ENCODE measurements at regions of chr10 and their contacts with region 1.

Region 1: DNA sequence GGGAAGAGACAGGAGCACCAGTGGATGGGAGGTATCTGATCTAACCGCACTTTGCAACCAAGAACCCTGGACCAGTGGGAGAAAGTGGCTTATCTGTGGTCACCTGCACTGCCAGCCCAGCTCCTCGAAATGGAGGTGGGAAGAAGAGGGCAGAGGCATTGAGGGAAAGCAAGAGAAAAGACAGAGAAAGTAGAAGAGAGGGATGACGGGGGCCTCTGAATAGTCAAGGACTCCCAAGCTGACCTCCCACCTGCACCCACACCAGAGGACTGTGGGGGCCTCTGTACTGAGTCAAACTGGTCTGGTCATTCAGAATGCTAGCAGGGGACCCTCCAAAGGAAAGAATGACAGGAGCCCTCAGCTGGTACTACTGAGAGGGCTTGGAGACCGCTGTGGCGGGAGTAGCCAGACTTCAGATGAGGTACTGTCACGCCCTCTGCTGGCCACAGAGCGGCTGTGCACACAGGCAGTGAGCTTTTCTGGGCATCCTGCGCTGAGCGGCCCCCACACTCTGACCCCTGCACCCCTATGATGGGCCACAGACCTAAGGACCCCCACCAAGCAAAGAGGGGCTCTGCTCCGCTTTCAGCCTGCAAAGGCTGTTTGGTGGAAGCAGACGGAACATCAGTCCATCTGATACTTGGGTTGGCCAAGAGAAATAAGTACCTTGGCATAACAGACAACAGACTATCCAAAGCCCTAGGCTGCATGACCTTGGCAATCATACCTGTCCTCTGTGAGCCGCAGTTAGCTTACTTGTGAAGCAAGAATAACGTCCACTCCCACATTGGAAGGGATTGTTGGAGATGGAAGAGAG is 112.9 kb downstream of the COL13A1 start:
- DNase-seq: peak; percentile 34
- H3K4me3 Mint-ChIP-seq: no peak overlapping the region
- H3K27ac Mint-ChIP-seq: no peak overlapping the region
- H3K4me1 Mint-ChIP-seq: no peaks in the 10 kb centered on the region
- H3K27me3 Mint-ChIP-seq: peaks cover 5% of the 10 kb centered on the region

Region 2: GRCh38 chr10:69639291-69640195 is 275.1 kb before region 1 on chr10:
- intact Hi-C with region 1: loop called (anchors 10 kb)
- DNase-seq: peak; percentile 38
- H3K4me3 Mint-ChIP-seq: no peak overlapping the region
- H3K27ac Mint-ChIP-seq: no peak overlapping the region
- H3K4me1 Mint-ChIP-seq: no peaks in the 10 kb centered on the region
- H3K27me3 Mint-ChIP-seq: peaks cover 3% of the 10 kb centered on the region

Region 3: DNA sequence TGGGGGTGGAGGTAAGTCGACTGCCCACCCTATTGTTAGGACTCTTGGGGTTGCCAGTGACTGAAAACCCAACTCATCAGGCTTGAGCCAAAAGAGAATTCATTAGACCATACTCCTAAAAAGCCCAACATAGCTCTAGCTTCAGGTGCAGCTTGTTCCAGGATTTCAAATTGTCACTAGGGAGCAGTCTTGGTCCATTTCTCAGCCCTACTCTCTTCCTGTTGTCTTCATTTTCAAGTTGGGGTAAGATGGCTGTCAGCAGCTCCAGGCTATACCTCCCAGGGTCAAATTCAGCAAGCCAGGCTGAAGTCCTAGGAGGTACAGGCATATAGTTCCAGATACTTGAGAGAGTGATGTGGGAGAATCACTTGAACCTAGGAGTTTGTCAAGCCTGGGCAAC is 127.8 kb before region 1 on chr10:
- intact Hi-C with region 1: loop called (anchors 1 kb)
- DNase-seq: no peak
- H3K4me3 Mint-ChIP-seq: no peak overlapping the region
- H3K27ac Mint-ChIP-seq: no peak overlapping the region
- H3K4me1 Mint-ChIP-seq: no peaks in the 10 kb centered on the region
- H3K27me3 Mint-ChIP-seq: peaks cover 9% of the 10 kb centered on the region

Region 4: DNA sequence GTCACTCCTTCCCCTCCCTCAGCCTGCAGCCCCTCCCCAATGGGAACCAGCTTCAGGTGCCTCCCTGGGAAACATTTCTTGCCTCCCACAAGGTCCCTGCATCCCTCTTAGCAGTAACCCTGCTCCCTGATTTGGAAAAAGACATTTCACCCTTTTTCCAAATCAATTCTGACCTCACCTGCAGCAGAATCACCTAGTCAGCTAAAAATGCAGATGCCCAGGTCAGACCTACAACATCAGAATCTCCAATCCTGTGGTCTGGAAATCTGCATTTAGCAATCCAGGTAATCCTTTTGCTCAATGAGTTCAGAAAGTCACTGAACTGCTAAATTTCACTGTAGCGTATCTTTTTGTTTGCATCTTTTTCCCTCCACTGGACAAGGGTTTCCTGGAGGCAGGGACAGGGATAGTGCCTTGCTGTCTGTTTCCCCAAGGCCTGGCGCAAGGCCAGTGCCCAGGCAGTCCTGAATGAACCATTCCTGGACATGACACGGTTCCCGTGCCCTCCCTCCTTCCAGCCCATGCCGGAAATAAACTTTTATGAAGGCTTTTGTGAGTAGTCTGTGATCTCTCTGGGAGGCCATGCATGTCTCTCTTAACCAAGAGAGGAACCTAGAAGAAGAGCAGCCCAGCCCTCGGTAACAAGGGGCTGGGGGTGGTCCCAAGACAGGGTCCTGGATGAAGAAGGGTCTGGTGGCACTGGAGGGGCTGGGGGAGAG is 68.9 kb before region 1 on chr10:
- intact Hi-C with region 1: no loop called
- DNase-seq: no peak
- H3K4me3 Mint-ChIP-seq: no peak overlapping the region
- H3K27ac Mint-ChIP-seq: no peak overlapping the region
- H3K4me1 Mint-ChIP-seq: no peaks in the 10 kb centered on the region
- H3K27me3 Mint-ChIP-seq: peaks cover 13% of the 10 kb centered on the region

Measured in activated T-helper 1 cell treated with anti-CD3 and anti-CD28 coated beads, Interleukin-12 subunit alpha, Interleukin-12 subunit beta, Interleukin-2, Interleukin-4 antibody, amounts not matched to agents 30 ng/mL and 10 ng/mL and 1 ng/mL, durations not matched to agents 14 hours and 24 hours and 36 hours (primary cell).